CD4-positive, alpha-beta memory T cell (primary cell): ENCODE measurements at regions of chr9 and their contacts with region 1.

Region 1: DNA sequence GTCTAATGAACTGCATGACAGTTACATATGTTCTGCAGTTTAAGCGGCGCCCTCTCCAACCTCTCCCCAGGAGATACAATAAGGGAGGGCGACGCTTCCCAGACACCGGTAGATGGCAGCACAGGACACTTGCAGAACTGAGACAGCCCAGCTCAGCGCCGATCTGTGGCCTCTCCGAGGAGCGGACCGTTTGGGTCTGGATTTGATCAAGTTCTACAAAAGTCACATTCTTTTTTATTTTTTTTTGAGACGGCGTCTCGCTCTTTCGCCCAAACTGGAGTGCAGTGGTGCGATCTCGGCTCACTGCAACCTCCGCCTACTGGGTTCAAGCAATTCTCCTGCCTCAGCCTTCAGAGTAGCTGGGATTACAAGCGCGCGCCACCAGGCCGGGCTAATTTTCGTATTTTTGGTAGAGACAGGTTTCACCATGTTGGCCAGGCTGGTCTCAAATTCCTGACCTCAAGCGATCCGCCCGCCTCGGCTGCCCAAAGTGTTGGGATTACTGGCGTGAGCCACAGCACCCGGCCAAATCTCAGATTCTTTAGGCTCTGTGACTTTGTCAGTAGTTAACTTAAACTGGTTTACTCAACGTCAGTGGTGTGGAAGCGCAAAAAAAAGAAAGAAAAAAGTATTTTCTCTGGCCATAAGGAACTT is 1.4 kb upstream of the ATOSB start:
- DNase-seq: peak; percentile 86 to 91 (median 89)
- H3K4me3 ChIP-seq: peak overlapping the region; percentile 86 to 88
- H3K4me3 Mint-ChIP-seq: peak overlapping the region; percentile 89 to 95 (median 93)
- H3K27ac ChIP-seq: peak overlapping the region; percentile 68
- H3K27ac Mint-ChIP-seq: peak overlapping the region; percentile 92 to 99 (median 96)
- H3K4me1 ChIP-seq: peaks cover 42% of the 10 kb centered on the region
- H3K4me1 Mint-ChIP-seq: peaks cover 29 to 47% (median 35%) of the 10 kb centered on the region in 4 donors
- H3K27me3 ChIP-seq: no peaks in the 10 kb centered on the region
- H3K27me3 Mint-ChIP-seq: no peaks in the 10 kb centered on the region

Region 2: DNA sequence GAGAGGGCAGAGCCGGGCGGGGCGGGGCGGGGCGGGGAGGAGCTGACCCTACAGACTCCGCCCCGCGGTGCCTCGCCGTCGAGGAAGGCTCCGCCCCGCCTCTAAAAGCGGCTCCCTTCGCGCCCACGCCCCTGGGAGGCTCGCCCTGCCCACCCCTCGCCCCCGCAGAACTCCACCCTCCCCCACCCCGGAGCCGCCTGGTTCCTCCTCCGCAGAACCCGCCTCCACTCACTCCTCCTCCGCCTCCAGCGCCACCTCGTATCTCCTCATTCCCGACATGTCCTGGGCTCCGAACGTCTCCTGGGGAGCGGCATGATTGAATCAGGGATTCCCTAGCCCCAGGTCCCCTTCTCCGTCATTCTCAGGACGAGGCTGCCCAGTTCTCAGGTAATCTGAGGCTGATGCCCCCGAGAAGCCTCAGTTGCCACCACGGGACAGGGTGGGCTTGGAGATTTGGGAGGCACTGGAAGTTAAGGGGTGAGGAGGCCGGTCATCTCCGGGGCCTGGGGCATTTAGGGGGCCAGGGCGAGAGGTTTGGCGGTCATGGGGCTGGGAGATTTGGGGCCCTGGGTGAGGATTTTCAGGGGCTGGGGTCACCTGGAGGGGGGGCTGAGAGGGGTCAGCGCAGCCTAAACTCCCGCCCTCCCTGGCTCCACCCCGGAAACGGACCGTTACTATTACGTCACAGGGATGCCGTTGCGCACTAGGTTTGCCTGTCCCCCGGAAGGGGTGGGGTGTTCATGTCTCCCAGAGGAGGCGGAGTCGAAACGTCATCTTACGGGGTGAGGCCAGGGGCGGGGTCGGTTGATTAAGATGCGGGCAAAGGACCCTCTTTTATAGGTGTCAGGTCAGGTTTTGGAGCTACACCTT is 451.4 kb before region 1 on chr9:
- CTCF ChIA-PET with region 1: no interaction called
- POLR2A ChIA-PET with region 1: interaction called, 3 read pairs
- intact Hi-C with region 1: loop called (anchors 2 kb)
- DNase-seq: peak; percentile 87 to 94 (median 89)
- H3K4me3 ChIP-seq: peak overlapping the region; percentile 75 to 95
- H3K4me3 Mint-ChIP-seq: peak overlapping the region; percentile 85 to 97 (median 93)
- H3K27ac ChIP-seq: peak overlapping the region; percentile 98
- H3K27ac Mint-ChIP-seq: peak overlapping the region; percentile 95 to 99 (median 99)
- H3K4me1 ChIP-seq: peaks cover 59% of the 10 kb centered on the region
- H3K4me1 Mint-ChIP-seq: peaks cover 41 to 65% (median 53%) of the 10 kb centered on the region in 4 donors
- H3K27me3 ChIP-seq: no peaks in the 10 kb centered on the region
- H3K27me3 Mint-ChIP-seq: no peaks in the 10 kb centered on the region

Region 3: GRCh38 chr9:35029852-35030251 is 87.2 kb before region 1 on chr9:
- CTCF ChIA-PET with region 1: no interaction called
- POLR2A ChIA-PET with region 1: no interaction called
- intact Hi-C with region 1: no loop called
- DNase-seq: no peak
- H3K4me3 ChIP-seq: no peak overlapping the region
- H3K4me3 Mint-ChIP-seq: no peak overlapping the region
- H3K27ac ChIP-seq: no peak overlapping the region
- H3K27ac Mint-ChIP-seq: peak overlapping the region in 1 of 7 donors; percentile 31
- H3K4me1 ChIP-seq: peaks cover 6% of the 10 kb centered on the region
- H3K4me1 Mint-ChIP-seq: peaks cover 0 to 10% (median 5%) of the 10 kb centered on the region in 4 donors
- H3K27me3 ChIP-seq: no peaks in the 10 kb centered on the region
- H3K27me3 Mint-ChIP-seq: no peaks in the 10 kb centered on the region

Region 4: GRCh38 chr9:35071814-35072460 is 45.1 kb before region 1 on chr9:
- CTCF ChIA-PET with region 1: interaction called, 5 read pairs
- POLR2A ChIA-PET with region 1: interaction called, 32 read pairs
- intact Hi-C with region 1: loop called (anchors 1 kb)
- DNase-seq: peak; percentile 72 to 80 (median 79)
- H3K4me3 ChIP-seq: peak overlapping the region; percentile 82 to 83
- H3K4me3 Mint-ChIP-seq: peak overlapping the region; percentile 81 to 95 (median 92)
- H3K27ac ChIP-seq: peak overlapping the region; percentile 94
- H3K27ac Mint-ChIP-seq: peak overlapping the region; percentile 81 to 100 (median 97)
- H3K4me1 ChIP-seq: peaks cover 52% of the 10 kb centered on the region
- H3K4me1 Mint-ChIP-seq: peaks cover 41 to 59% (median 51%) of the 10 kb centered on the region in 4 donors
- H3K27me3 ChIP-seq: no peaks in the 10 kb centered on the region
- H3K27me3 Mint-ChIP-seq: no peaks in the 10 kb centered on the region

Region 5: DNA sequence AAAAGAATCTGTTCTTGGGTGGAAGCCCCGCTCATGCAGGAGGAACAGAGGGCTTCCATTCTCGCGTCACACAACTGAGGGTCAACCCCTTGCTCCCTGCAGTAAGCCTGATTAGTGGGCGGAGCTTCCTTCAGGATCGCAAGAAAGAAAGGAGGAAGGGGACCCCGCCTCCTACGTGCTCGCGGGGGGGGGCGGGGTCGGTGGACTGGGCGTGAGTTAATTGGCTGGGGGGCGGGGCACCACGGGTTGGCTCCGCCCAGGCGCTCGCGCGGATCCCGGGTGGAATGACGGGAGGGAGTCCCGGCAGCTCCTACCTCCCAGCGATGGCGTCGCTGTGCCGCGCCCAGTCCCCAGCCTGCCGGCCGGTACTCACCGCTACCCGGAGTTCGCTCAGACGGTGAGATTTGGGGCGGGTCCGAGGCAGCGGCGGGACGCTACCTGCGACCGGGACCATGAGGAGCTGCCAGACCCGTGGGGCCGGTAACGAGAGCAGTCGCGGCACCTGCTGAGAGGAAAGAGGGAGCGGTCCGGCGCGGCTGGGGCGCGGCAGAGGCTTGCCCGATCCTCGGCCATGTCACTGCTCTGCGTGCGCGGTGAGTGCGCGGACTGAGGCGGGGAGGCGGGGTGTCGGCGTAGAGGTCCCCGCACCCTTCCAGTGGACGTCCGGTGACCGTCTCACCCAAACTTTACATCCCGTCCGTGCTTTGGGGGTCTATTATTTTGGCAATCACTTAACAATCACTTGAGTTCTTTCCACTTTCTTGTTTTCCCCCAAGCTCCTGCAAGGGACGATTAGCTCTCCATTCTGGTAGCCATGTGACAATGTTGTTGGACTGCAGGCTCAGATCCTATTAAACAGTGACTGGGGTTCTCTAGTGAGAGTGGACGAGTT is 44.9 kb after region 1 on chr9 and contains the start of gene UNC13B:
- CTCF ChIA-PET with region 1: interaction called, 4 read pairs
- POLR2A ChIA-PET with region 1: no interaction called
- intact Hi-C with region 1: loop called (anchors 1 kb)
- DNase-seq: peak; percentile 58 to 73 (median 65)
- H3K4me3 ChIP-seq: peak within 1 kb of the TSS; percentile 50 to 73
- H3K4me3 Mint-ChIP-seq: peak within 1 kb of the TSS; percentile 88 to 96 (median 94)
- H3K27ac ChIP-seq: peak within 1 kb of the TSS; percentile 20
- H3K27ac Mint-ChIP-seq: peak within 1 kb of the TSS; percentile 53 to 88 (median 78)
- H3K4me1 ChIP-seq: peaks cover 17% of the 10 kb centered on the region
- H3K4me1 Mint-ChIP-seq: peaks cover 11 to 32% (median 18%) of the 10 kb centered on the region in 4 donors
- H3K27me3 ChIP-seq: no peaks in the 10 kb centered on the region
- H3K27me3 Mint-ChIP-seq: no peaks in the 10 kb centered on the region
- total RNA-seq, gene UNC13B: 0.94 to 1.6 TPM

Region 6: GRCh38 chr9:35553670-35554543 is 436.9 kb after region 1 on chr9:
- CTCF ChIA-PET with region 1: interaction called, 6 read pairs
- POLR2A ChIA-PET with region 1: no interaction called
- intact Hi-C with region 1: loop called (anchors 1 kb)
- DNase-seq: peak in 4 of 5 donors; percentile 26 to 36 (median 31)
- H3K4me3 ChIP-seq: no peak overlapping the region
- H3K4me3 Mint-ChIP-seq: no peak overlapping the region
- H3K27ac ChIP-seq: no peak overlapping the region
- H3K27ac Mint-ChIP-seq: no peak overlapping the region
- H3K4me1 ChIP-seq: no peaks in the 10 kb centered on the region
- H3K4me1 Mint-ChIP-seq: no peaks in the 10 kb centered on the region
- H3K27me3 ChIP-seq: no peaks in the 10 kb centered on the region
- H3K27me3 Mint-ChIP-seq: peaks cover 1 to 2% of the 10 kb centered on the region in 2 donors

Region 7: GRCh38 chr9:35829084-35829763 is 712.2 kb after region 1 on chr9 and contains the start of gene TMEM8B:
- CTCF ChIA-PET with region 1: no interaction called
- POLR2A ChIA-PET with region 1: no interaction called
- intact Hi-C with region 1: loop called (anchors 2 kb)
- DNase-seq: peak; percentile 85 to 96 (median 88)
- H3K4me3 ChIP-seq: peak within 1 kb of the TSS; percentile 61 to 70
- H3K4me3 Mint-ChIP-seq: peak within 1 kb of the TSS; percentile 92 to 100 (median 96)
- H3K27ac ChIP-seq: peak within 1 kb of the TSS; percentile 66
- H3K27ac Mint-ChIP-seq: peak within 1 kb of the TSS; percentile 74 to 99 (median 98)
- H3K4me1 ChIP-seq: peaks cover 20% of the 10 kb centered on the region
- H3K4me1 Mint-ChIP-seq: peaks cover 23 to 39% (median 35%) of the 10 kb centered on the region in 4 donors
- H3K27me3 ChIP-seq: no peaks in the 10 kb centered on the region
- H3K27me3 Mint-ChIP-seq: no peaks in the 10 kb centered on the region
- total RNA-seq, gene TMEM8B: 7.4 to 10.5 TPM